ENCODE measurements at regions of chr11 and their contacts with region 1.

Region 1: GRCh38 chr11:33857933-33858371 is 33.9 kb downstream of the LMO2 start:
- DNase-seq: peak; percentile 20
- H3K4me3 ChIP-seq: no peak overlapping the region
- H3K27ac ChIP-seq: no peak overlapping the region
- H3K27me3 ChIP-seq: peaks cover 68% of the 10 kb centered on the region
- CTCF ChIP-seq: peak; percentile 97

Region 2: GRCh38 chr11:33847251-33847650 is 10.7 kb before region 1 on chr11:
- CTCF ChIA-PET with region 1: interaction called, 10 read pairs
- POLR2A ChIA-PET with region 1: no interaction called
- DNase-seq: no peak
- H3K4me3 ChIP-seq: no peak overlapping the region
- H3K27ac ChIP-seq: no peak overlapping the region
- H3K27me3 ChIP-seq: peaks cover 20% of the 10 kb centered on the region
- CTCF ChIP-seq: no peak

Region 3: DNA sequence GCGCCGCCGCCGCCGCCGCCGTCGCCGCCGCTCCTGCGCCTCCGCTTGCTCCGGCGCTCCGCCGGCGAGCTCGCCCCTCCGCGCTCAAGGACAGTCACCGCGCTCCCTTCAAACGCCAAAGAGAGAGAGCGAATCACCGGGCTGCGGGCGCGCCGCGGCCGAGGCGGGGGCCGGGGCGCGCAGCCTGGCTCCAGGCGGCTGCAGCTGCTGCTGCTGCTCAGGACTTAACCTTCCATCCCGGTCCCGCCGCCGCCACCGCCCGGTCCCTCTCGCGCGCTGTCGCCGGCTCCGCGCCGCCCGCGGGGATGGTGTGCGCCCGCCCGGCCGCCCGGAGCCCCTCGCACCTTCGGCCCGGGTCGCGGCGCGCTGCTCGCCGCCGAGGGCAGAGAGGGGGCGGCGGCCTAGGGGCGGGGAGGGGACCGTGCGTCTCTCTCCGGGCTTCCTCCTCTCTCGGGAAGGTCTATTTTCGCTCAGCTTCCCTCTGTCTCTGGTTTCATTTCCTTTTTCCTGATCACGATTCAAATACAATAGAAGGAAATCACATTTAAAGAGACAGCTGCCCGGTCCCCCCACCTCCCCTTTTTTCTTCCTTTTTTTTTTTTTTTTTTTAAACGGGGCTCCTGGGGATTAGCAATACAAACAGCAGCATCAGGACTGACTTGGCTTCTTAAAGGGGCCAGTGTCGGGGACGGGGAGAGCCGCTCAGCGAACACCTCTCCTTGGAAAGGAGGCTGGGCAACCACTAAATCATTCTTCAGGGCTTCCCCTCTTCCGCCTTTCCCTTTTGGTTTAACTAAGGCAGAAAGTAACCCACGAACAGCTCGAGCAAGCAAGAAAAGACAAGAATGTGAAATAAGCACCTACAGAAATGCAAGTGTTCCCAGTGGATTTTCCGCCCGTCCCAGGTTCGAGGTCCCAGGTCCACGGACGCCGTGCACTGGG is 11.8 kb after region 1 on chr11:
- CTCF ChIA-PET with region 1: interaction called, 33 read pairs
- POLR2A ChIA-PET with region 1: no interaction called
- DNase-seq: no peak
- H3K4me3 ChIP-seq: peak overlapping the region; percentile 55
- H3K27ac ChIP-seq: no peak overlapping the region
- H3K27me3 ChIP-seq: peaks cover 67% of the 10 kb centered on the region
- CTCF ChIP-seq: no peak

Region 4: DNA sequence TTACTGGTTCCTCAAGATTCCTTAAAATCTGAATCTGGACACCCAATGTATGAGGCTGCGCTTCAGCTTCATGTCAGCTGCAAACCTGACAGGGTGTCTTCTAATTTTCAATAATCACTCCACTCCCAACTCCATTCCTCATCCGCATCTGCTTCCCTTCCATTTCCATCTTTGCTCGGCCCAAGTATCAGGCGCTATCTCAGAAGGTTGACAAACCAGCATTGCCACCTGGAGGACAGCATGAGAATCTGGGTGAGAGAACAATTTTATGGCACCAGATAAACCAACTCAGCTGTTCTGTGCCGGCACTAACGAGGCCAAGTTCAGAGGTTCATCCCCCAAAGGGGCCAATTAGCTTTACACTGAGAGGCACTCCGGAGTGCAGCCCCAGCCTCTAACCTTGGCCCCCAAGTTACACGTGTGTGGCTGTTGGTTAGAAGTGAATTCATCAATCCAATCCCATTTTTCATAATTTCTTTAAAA is 113.1 kb after region 1 on chr11:
- CTCF ChIA-PET with region 1: interaction called, 85 read pairs
- POLR2A ChIA-PET with region 1: no interaction called
- DNase-seq: peak; percentile 4
- H3K4me3 ChIP-seq: no peak overlapping the region
- H3K27ac ChIP-seq: no peak overlapping the region
- H3K27me3 ChIP-seq: peaks cover 15% of the 10 kb centered on the region
- CTCF ChIP-seq: peak; percentile 64

Region 5: DNA sequence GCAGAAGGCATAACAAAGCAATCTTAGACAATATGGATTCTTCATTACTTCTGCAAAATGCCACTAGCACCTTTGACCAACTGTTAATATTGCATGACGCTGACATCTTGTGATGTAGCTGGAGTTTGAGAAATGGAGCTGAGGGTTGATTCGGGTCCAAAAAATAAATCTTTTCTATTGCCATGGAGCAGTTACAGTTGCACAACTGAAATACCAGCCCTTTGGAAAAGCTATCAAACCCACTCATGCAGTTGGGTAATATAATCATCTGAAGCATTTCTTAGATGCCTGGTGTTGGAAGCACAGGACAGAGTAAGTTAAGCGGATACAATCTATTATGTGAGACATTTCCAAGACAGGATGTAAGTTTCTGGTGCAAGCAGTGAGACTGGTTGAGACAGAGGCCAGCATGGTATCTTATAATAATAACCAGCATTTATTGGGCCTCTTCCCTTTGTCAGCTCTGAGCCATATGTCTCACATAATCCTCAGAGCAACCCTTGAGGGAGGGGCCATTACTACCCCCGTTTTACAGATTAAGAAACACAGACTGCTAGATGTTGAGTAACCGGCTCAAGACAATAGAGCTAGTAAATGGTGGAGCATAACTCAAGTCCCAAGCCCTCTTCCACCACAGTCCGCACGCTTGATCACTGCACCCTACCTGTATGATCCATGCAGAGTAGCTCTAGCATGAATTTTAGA is 118.7 kb after region 1 on chr11:
- CTCF ChIA-PET with region 1: interaction called, 85 read pairs
- POLR2A ChIA-PET with region 1: no interaction called
- DNase-seq: no peak
- H3K4me3 ChIP-seq: no peak overlapping the region
- H3K27ac ChIP-seq: no peak overlapping the region
- H3K27me3 ChIP-seq: peaks cover 26% of the 10 kb centered on the region
- CTCF ChIP-seq: no peak

Region 6: GRCh38 chr11:33987975-33988580 is 130.1 kb after region 1 on chr11:
- CTCF ChIA-PET with region 1: interaction called, 69 read pairs
- POLR2A ChIA-PET with region 1: no interaction called
- DNase-seq: peak; percentile 49
- H3K4me3 ChIP-seq: no peak overlapping the region
- H3K27ac ChIP-seq: no peak overlapping the region
- H3K27me3 ChIP-seq: no peaks in the 10 kb centered on the region
- CTCF ChIP-seq: peak; percentile 79